ENCODE measurements at regions of chr12 and their contacts with region 1.

Region 1: DNA sequence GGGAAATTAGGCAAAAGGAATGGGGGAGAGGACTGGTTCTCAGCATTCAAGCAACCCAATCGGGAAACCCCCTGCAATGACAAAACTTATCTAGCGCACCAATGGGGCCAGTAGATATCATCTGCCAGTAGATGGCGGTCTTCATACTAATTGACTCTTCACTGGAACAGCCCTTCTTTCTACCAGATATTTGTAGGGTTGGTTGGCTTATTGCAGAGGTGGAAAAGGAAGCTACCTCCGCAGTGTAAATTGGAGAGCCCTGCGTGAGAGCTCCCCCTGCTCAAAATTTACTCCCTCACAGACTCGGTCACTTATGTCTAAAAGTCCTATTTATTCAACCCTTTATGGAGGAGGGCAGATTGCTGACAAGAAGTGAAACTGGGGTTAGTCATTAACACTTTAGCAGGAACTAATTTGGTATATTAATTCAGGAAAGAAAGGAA is 166.1 kb upstream of the CCND2 start:
- DNase-seq: peak; percentile 33
- ATAC-seq: peak; percentile 98
- H3K4me3 Mint-ChIP-seq: peak overlapping the region; percentile 45
- H3K27ac Mint-ChIP-seq: peak overlapping the region; percentile 64
- H3K4me1 Mint-ChIP-seq: peaks cover 19% of the 10 kb centered on the region
- H3K27me3 Mint-ChIP-seq: peaks cover 5% of the 10 kb centered on the region
- CTCF ChIP-seq: peak; percentile 34

Region 2: GRCh38 chr12:3885277-3886094 is 222.0 kb before region 1 on chr12:
- CTCF ChIA-PET with region 1: interaction called, 7 read pairs
- POLR2A ChIA-PET with region 1: no interaction called
- intact Hi-C with region 1: loop called (anchors 1 kb)
- DNase-seq: no peak
- ATAC-seq: peak; percentile 42
- H3K4me3 Mint-ChIP-seq: no peak overlapping the region
- H3K27ac Mint-ChIP-seq: no peak overlapping the region
- H3K4me1 Mint-ChIP-seq: peaks cover 4% of the 10 kb centered on the region
- H3K27me3 Mint-ChIP-seq: peaks cover 10% of the 10 kb centered on the region
- CTCF ChIP-seq: peak; percentile 26

Region 3: GRCh38 chr12:4037747-4038312 is 69.6 kb before region 1 on chr12:
- CTCF ChIA-PET with region 1: no interaction called
- POLR2A ChIA-PET with region 1: no interaction called
- intact Hi-C with region 1: no loop called
- DNase-seq: no peak
- ATAC-seq: no peak
- H3K4me3 Mint-ChIP-seq: no peak overlapping the region
- H3K27ac Mint-ChIP-seq: no peak overlapping the region
- H3K4me1 Mint-ChIP-seq: no peaks in the 10 kb centered on the region
- H3K27me3 Mint-ChIP-seq: peaks cover 8% of the 10 kb centered on the region
- CTCF ChIP-seq: no peak

Region 4: GRCh38 chr12:4084573-4084972 is 22.9 kb before region 1 on chr12:
- CTCF ChIA-PET with region 1: no interaction called
- POLR2A ChIA-PET with region 1: no interaction called
- intact Hi-C with region 1: no loop called
- DNase-seq: no peak
- ATAC-seq: no peak
- H3K4me3 Mint-ChIP-seq: no peak overlapping the region
- H3K27ac Mint-ChIP-seq: no peak overlapping the region
- H3K4me1 Mint-ChIP-seq: peaks cover 7% of the 10 kb centered on the region
- H3K27me3 Mint-ChIP-seq: peaks cover 6% of the 10 kb centered on the region
- CTCF ChIP-seq: no peak

Region 5: GRCh38 chr12:4118017-4118510 is 10.6 kb after region 1 on chr12:
- CTCF ChIA-PET with region 1: interaction called, 15 read pairs
- POLR2A ChIA-PET with region 1: interaction called, 18 read pairs
- intact Hi-C with region 1: loop called (anchors 1 kb)
- DNase-seq: no peak
- ATAC-seq: peak; percentile 80
- H3K4me3 Mint-ChIP-seq: peak overlapping the region; percentile 69
- H3K27ac Mint-ChIP-seq: peak overlapping the region; percentile 81
- H3K4me1 Mint-ChIP-seq: peaks cover 56% of the 10 kb centered on the region
- H3K27me3 Mint-ChIP-seq: no peaks in the 10 kb centered on the region
- CTCF ChIP-seq: no peak

Region 6: GRCh38 chr12:4148418-4149056 is 41.1 kb after region 1 on chr12:
- CTCF ChIA-PET with region 1: interaction called, 13 read pairs
- POLR2A ChIA-PET with region 1: interaction called, 11 read pairs
- intact Hi-C with region 1: loop called (anchors 1 kb)
- DNase-seq: peak; percentile 80
- ATAC-seq: peak; percentile 83
- H3K4me3 Mint-ChIP-seq: peak overlapping the region; percentile 75
- H3K27ac Mint-ChIP-seq: peak overlapping the region; percentile 92
- H3K4me1 Mint-ChIP-seq: peaks cover 95% of the 10 kb centered on the region
- H3K27me3 Mint-ChIP-seq: no peaks in the 10 kb centered on the region
- CTCF ChIP-seq: no peak

Region 7: DNA sequence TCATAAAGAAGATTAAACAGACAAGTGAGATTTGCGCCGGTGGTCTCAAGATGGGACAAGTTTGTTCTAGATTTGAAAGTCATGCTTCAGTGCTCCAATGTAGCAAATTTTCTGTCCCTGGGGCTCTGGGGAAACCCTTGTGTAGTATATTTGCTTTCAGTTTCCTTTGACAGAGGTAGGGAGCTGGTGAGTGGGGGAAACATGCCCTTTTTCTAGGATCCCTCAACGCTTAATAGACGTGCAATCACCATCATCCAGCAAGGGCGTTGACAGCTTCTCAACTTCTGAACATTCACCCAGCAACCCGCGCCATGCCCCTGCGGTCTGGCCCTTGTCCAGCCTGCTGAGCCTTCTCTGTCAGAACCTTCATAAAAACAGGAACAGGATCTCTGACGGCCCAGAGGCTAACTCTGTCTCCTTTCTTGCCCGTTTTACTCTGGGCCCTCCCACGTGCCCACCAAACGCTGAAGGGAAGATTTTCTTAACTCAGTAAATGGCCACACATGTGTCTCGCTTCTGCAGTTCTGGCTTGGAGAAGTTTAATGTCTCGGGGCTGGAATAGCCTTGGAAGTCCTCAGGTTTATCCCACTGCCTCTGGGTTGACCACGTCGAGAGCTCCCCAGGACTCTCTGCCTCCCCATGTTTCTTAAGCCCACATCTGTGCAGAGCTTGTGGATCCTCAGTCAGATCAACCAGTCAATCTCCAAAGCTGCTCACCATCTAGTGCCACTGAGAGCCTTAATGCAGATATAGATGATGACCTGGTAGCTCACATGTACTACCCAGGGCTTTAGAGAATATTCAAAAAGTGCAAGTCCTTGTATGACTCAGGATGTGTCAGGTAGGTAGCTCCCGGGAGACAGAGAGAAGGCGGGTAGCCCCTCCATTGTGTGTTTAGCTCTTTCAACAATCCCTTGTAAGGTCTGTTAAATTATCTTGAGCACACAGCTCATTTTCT is 108.1 kb after region 1 on chr12:
- CTCF ChIA-PET with region 1: interaction called, 14 read pairs
- POLR2A ChIA-PET with region 1: interaction called, 12 read pairs
- intact Hi-C with region 1: loop called (anchors 1 kb)
- DNase-seq: peak; percentile 60
- ATAC-seq: peak; percentile 83
- H3K4me3 Mint-ChIP-seq: peak overlapping the region; percentile 80
- H3K27ac Mint-ChIP-seq: peak overlapping the region; percentile 93
- H3K4me1 Mint-ChIP-seq: peaks cover 49% of the 10 kb centered on the region
- H3K27me3 Mint-ChIP-seq: no peaks in the 10 kb centered on the region
- CTCF ChIP-seq: no peak

Region 8: GRCh38 chr12:4538207-4539160 is 431.0 kb after region 1 on chr12 and contains the start of gene RAD51AP1:
- CTCF ChIA-PET with region 1: no interaction called
- POLR2A ChIA-PET with region 1: interaction called, 3 read pairs
- intact Hi-C with region 1: loop called (anchors 10 kb)
- DNase-seq: peak; percentile 86
- ATAC-seq: peak; percentile 98
- H3K4me3 Mint-ChIP-seq: peak within 1 kb of the TSS; percentile 91
- H3K27ac Mint-ChIP-seq: peak within 1 kb of the TSS; percentile 99
- H3K4me1 Mint-ChIP-seq: peaks cover 31% of the 10 kb centered on the region
- H3K27me3 Mint-ChIP-seq: no peaks in the 10 kb centered on the region
- CTCF ChIP-seq: no peak
- total RNA-seq, gene RAD51AP1: 5.6 and 5.9 TPM in 2 replicates

Measured in activated B cell treated with CpG ODN at 0.5 μM for 24 hours (primary cell).